Right ventricle myocardium inferior (tissue), 1 donor: ENCODE measurements at regions of chr3 and their contacts with region 1.

Region 1: GRCh38 chr3:129650256-129650872 is 43.9 kb upstream of the PLXND1 start:
- DNase-seq: no peak
- ATAC-seq: peak; percentile 80

Region 2: DNA sequence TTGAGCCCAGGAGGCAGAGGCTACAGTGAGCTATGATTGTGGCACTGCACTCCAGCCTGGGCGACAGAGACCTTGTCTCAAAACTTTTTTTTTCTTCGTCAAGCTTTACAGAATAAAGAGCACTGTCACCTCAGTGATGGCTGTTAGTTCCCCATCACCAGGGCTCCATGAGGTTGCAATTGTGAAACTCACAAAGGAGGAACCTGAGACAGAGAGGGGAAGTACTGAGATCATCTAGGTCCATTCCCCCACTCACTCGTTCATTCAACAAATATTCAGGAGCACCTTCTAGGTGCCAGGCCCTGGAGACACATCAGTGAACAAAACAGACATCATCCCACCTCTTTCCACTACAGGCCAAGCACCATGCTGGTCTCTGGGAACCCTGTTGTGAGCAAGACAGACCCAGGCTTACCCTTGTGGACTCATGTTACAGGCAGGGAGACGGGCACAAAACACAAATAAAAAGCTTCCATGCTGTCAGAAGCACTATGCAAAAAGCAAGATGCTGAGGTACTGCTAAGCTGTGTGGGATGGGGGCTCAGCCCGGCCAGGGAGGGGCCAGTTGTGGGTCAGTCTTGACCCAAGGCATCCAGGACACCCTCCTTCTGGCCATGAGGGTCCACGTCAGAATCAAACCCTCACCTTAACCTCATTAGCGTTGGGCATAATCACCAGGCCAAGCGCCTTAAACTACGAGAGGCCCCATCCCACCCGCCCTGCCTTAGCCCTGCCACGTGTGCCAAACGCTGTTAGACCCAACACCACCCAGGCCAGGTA is 124.1 kb before region 1 on chr3:
- intact Hi-C with region 1: no loop called
- DNase-seq: no peak
- ATAC-seq: no peak

Region 3: GRCh38 chr3:129596194-129597086 is 53.9 kb before region 1 on chr3:
- intact Hi-C with region 1: no loop called
- DNase-seq: peak; percentile 90
- ATAC-seq: peak; percentile 86

Region 4: DNA sequence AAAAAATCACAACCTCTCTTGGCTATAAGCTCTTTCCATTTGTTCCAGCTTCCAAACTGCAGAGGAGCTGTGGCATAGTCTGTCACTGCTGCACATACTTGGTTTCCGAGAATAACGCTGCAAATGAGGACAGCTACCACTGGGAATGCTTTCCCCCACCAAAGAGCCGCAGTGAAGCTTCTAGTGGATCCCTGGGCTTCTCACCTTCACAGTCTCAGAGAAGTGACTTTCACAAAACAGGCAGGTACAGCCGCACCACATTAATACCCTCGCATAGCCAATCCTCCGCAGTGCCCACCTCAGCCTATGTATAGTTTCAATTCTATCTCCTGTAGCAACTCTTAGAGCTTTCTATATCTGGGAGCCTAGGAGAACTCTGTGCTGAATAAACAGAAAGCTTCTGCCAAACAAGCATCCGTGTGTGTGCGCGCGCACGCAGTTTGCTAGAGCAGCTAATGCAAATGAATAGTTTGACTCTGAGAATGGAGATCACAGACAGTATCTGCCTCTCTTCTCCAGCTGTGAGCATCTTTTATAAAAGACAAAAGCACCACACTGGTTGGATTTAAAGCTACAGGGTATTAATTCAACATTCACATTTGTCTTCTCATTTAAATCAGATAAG is 38.0 kb after region 1 on chr3:
- intact Hi-C with region 1: loop called (anchors 5 kb)
- DNase-seq: peak; percentile 89
- ATAC-seq: peak; percentile 84

Region 5: GRCh38 chr3:129745253-129745652 is 94.9 kb after region 1 on chr3:
- intact Hi-C with region 1: loop called (anchors 10 kb)
- DNase-seq: no peak
- ATAC-seq: peak; percentile 64

Region 6: GRCh38 chr3:129934234-129935123 is 284.1 kb after region 1 on chr3:
- intact Hi-C with region 1: loop called (anchors 5 kb)
- DNase-seq: no peak
- ATAC-seq: no peak